ENCODE measurements at regions of chr6 and their contacts with region 1.

Region 1: DNA sequence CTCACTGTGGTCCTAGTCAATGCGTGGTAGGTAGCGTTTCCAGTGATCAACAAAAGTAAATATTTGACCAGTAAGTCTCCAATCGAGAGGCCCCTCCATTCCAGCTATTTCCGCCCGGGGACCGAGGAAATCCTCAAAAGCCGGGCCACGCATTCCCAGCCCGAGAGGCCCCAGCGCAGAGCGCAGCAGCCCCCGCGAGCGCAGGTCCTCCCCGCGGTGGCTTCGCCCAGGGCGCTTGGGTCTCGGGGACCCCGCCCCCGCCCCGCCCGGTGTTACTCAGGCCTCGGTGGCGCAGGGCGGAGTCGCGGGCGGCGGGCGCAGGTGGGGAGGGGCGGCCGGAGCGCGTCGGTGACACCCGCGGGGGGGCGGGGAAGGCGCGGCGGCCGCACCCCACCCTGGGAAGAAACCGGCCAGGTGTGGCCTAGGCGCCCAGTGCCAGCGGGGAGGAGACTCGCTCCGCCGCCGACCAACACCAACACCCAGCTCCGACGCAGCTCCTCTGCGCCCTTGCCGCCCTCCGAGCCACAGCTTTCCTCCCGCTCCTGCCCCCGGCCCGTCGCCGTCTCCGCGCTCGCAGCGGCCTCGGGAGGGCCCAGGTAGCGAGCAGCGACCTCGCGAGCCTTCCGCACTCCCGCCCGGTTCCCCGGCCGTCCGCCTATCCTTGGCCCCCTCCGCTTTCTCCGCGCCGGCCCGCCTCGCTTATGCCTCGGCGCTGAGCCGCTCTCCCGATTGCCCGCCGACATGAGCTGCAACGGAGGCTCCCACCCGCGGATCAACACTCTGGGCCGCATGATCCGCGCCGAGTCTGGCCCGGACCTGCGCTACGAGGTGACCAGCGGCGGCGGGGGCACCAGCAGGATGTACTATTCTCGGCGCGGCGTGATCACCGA is at the start of gene DSP:
- DNase-seq: peak; percentile 96
- ATAC-seq: peak; percentile 83
- H3K4me3 ChIP-seq: peak within 1 kb of the TSS; percentile 94 to 100 (median 95)
- H3K27ac ChIP-seq: peak within 1 kb of the TSS; percentile 90
- H3K4me1 ChIP-seq: peaks cover 53% of the 10 kb centered on the region
- H3K27me3 ChIP-seq: peaks cover 0 to 3% of the 10 kb centered on the region in 2 experiments; a peak in 1 of 5 replicates
- CTCF ChIP-seq: peak; percentile 14; the same call in 1 of the 2 replicates
- EP300 ChIP-seq: peak; percentile 46 to 89; a peak in 3 of 4 replicates
- POLR2A ChIP-seq: peak; percentile 92 to 95
- RAD21 ChIP-seq: peak; percentile 66
- total RNA-seq, gene DSP: 89.8 and 133 TPM in 2 replicates

Region 2: DNA sequence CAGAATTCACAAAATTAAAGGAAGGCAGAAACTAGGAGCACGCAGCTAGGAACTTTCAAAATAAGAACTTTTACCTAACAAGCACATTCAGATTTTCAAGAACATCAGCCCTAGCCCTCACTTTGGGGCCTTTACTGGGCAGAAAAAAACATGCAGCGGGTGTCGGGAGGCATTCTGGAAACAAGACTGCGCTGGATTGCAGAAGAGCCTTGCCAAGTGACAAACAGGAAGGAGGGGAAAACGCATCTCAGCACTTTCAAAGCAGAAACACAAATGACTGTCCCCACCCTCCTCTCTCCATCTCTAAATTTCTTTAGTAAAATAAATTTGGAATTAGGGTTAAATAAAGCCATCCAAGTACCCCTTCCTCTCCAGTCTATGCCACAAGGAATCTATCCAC is 508.2 kb before region 1 on chr6:
- CTCF ChIA-PET with region 1: no interaction called
- POLR2A ChIA-PET with region 1: no interaction called
- in situ Hi-C with region 1: no loop called
- intact Hi-C with region 1: no loop called
- DNase-seq: no peak
- ATAC-seq: no peak
- H3K4me3 ChIP-seq: no peak overlapping the region
- H3K27ac ChIP-seq: no peak overlapping the region
- H3K4me1 ChIP-seq: no peaks in the 10 kb centered on the region
- H3K27me3 ChIP-seq: no peaks in the 10 kb centered on the region
- CTCF ChIP-seq: no peak
- EP300 ChIP-seq: no peak
- POLR2A ChIP-seq: no peak
- RAD21 ChIP-seq: no peak

Region 3: GRCh38 chr6:7312616-7313504 is 228.6 kb before region 1 on chr6 and contains the start of gene SSR1:
- CTCF ChIA-PET with region 1: no interaction called
- POLR2A ChIA-PET with region 1: interaction called, 4 read pairs
- in situ Hi-C with region 1: no loop called
- intact Hi-C with region 1: loop called (anchors 5 kb)
- DNase-seq: peak; percentile 95
- ATAC-seq: peak; percentile 93
- H3K4me3 ChIP-seq: peak within 1 kb of the TSS; percentile 85 to 98 (median 97)
- H3K27ac ChIP-seq: peak within 1 kb of the TSS; percentile 91
- H3K4me1 ChIP-seq: peaks cover 69% of the 10 kb centered on the region
- H3K27me3 ChIP-seq: no peaks in the 10 kb centered on the region; a peak in 1 of 5 replicates
- CTCF ChIP-seq: no peak
- EP300 ChIP-seq: peak in 1 of 2 experiments; percentile 67; a peak in 2 of 4 replicates
- POLR2A ChIP-seq: peak; percentile 97 to 98
- RAD21 ChIP-seq: peak; percentile 54
- total RNA-seq, gene SSR1: 208 and 243 TPM in 2 replicates

Region 4: GRCh38 chr6:7424967-7425807 is 116.2 kb before region 1 on chr6:
- CTCF ChIA-PET with region 1: no interaction called
- POLR2A ChIA-PET with region 1: interaction called, 42 read pairs
- in situ Hi-C with region 1: loop called (anchors 5 kb)
- intact Hi-C with region 1: loop called (anchors 1 kb)
- DNase-seq: peak; percentile 79
- ATAC-seq: peak; percentile 85
- H3K4me3 ChIP-seq: no peak overlapping the region
- H3K27ac ChIP-seq: no peak overlapping the region
- H3K4me1 ChIP-seq: peaks cover 24% of the 10 kb centered on the region
- H3K27me3 ChIP-seq: no peaks in the 10 kb centered on the region
- CTCF ChIP-seq: peak; percentile 87
- EP300 ChIP-seq: no peak
- POLR2A ChIP-seq: no peak
- RAD21 ChIP-seq: peak; percentile 84

Region 5: DNA sequence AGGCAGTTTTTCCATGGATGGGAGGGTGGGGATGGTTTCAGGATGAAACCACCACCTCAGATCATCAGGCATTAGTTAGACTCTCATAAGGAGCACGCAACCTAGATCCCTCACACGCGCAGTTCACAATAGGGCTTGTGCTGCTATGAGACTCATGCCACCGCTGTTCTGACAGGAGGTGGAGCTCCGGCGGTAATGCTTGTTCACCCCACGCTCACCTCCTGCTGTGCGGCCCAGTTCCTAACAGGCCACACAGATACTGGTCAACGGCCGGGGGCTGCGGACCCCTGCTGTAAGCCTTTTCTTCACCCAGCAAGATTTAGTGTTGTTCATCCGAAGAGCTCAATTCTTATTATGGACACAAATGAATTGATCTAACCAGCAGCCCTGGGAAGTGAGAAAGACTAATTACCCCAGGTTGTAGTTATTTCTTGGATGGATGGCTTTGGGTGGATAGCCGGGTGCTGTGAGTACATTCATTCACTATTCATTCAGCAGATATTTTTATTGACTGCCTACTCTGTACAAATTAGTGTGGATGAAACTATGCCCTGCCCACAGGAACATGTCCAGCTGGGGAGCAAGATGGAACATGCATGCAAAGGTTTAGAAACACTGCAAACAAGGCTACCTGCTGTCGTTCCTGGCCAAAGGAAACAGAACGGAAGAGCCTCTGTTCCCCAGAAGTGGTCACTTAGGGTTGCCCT is 94.6 kb before region 1 on chr6:
- CTCF ChIA-PET with region 1: no interaction called
- POLR2A ChIA-PET with region 1: interaction called, 4 read pairs
- in situ Hi-C with region 1: no loop called
- intact Hi-C with region 1: loop called (anchors 1 kb)
- DNase-seq: peak; percentile 49
- ATAC-seq: peak; percentile 93
- H3K4me3 ChIP-seq: peak overlapping the region; percentile 16 to 55 (median 29); a peak in 5 of 6 replicates
- H3K27ac ChIP-seq: no peak overlapping the region
- H3K4me1 ChIP-seq: peaks cover 48% of the 10 kb centered on the region
- H3K27me3 ChIP-seq: peaks cover 5 to 20% of the 10 kb centered on the region in 2 experiments; a peak in 4 of 5 replicates
- CTCF ChIP-seq: peak; percentile 78
- EP300 ChIP-seq: no peak
- POLR2A ChIP-seq: no peak
- RAD21 ChIP-seq: peak; percentile 52; the same call in 1 of the 2 replicates

Region 6: DNA sequence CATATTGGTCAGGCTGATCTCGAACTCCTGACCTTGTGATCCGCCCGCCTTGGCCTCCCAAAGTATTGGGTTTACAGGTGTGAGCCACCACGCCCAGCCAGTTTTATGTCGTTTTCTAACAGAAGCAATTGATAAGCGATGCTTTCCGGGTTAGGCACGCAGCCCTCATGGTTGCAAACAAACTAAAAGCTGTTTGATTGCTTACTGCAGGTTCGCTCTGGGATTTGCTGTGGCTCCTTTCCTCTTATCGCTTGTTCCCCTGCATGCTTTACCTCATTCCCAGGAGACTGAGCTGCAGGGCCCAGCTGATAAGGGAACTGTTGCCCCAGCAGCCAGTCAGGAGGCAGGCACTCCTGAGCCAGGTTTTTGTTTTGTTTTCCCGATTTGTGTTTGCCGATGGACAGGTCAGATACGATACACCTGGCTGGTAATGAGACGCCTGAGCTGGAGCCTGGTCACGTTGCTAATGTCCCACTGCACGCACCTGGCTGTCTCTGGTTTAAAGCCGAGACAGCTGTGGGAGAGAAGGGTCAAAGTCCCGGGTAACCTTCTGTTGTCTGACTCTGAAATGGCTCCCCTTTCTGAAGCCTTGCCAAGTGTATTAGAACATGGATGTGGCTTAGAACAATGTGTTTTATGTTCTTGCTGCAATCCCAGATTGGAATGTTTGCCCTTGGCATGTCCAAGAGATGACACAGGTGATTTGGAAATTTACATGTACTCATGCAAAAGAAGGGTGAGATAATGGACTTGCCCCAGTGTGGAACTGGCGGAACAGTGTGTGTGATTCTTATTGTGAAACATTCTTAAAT is 19.9 kb after region 1 on chr6:
- CTCF ChIA-PET with region 1: no interaction called
- POLR2A ChIA-PET with region 1: interaction called, 132 read pairs
- in situ Hi-C with region 1: no loop called
- intact Hi-C with region 1: loop called (anchors 1 kb)
- DNase-seq: peak; percentile 100
- ATAC-seq: peak; percentile 92
- H3K4me3 ChIP-seq: peak overlapping the region in 1 of 3 experiments; percentile 12; a peak in 2 of 6 replicates
- H3K27ac ChIP-seq: peak overlapping the region; percentile 78
- H3K4me1 ChIP-seq: peaks cover 62% of the 10 kb centered on the region
- H3K27me3 ChIP-seq: no peaks in the 10 kb centered on the region
- CTCF ChIP-seq: peak; percentile 22; the same call in 1 of the 2 replicates
- EP300 ChIP-seq: peak in 1 of 2 experiments; percentile 89
- POLR2A ChIP-seq: peak; percentile 31 to 60; a peak in 2 of 4 replicates
- RAD21 ChIP-seq: peak; percentile 34

Region 7: DNA sequence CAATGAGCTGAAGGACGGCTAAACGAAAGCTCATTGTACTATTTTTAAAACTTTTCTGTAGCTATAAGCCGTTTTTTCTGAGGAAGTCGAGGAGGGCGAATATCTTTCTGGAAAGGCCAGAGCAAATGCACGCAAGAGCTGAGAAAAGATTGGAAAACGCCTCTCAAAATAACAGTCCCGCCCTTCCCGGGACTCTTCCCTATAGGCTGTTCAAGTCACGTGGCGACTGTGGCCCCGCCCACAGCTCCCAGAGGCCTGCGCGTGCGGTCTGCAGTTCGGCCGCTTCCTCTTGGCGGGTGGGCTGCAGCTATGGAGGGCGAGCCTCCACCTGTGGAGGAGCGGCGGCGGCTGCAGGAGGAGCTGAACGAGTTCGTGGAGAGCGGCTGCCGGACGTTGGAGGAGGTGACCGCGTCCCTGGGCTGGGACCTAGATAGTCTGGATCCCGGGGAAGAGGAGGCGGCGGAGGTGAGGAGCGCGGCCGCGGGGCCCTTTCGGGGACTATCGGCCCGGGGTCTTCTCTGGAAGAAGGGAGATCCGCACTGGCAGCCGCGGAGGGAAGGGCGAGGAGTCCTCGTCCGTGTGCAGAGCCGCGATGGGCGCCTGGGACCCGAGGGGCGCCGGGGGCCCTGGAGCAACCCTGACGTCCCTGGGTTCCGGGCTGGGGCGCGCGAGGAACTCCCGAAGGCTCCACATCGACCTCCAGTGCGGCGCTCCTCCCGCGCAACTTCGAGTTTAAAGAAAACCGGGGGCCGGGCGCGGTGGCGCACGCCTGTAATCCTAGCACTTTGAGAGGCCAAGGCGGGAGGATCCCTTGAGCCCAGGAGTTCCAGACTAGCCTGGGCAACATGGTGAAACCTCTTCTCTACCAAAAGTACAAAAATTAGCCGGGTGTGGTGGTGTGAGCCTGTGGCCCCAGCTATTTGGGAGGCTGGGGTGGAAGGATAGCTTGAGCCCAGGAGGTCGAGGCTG is 48.8 kb after region 1 on chr6 and contains the start of gene SNRNP48:
- CTCF ChIA-PET with region 1: no interaction called
- POLR2A ChIA-PET with region 1: interaction called, 13 read pairs
- in situ Hi-C with region 1: no loop called
- intact Hi-C with region 1: loop called (anchors 2 kb)
- DNase-seq: peak; percentile 93
- ATAC-seq: peak; percentile 97
- H3K4me3 ChIP-seq: peak within 1 kb of the TSS; percentile 77 to 88 (median 86)
- H3K27ac ChIP-seq: peak within 1 kb of the TSS; percentile 64
- H3K4me1 ChIP-seq: peaks cover 34% of the 10 kb centered on the region
- H3K27me3 ChIP-seq: no peaks in the 10 kb centered on the region
- CTCF ChIP-seq: 0 out of 2 replicates have a peak, but pooled peaks have one; percentile 11
- EP300 ChIP-seq: no peak
- POLR2A ChIP-seq: peak; percentile 73 to 96; a peak in 3 of 4 replicates
- RAD21 ChIP-seq: no peak
- total RNA-seq, gene SNRNP48: 47.5 and 82.0 TPM in 2 replicates

Region 8: DNA sequence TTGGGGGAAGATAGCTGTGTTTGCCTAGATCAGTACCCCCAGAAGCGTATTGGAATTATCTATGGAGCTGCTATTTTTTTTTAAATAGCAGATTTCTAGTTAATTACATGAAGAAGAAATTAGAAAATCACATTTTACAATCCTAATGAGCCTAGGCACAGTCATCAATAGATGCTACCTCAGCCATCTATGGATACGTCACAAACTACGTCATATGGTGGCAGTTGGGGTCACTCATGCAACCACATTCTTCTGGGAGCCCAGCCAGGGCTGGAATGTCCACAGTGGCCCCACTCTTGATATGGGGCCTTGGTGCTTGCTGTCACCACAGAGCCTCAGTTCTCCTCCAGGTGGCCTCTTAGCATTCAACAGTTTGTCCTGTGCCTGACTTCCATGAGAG is 111.5 kb after region 1 on chr6:
- CTCF ChIA-PET with region 1: no interaction called
- POLR2A ChIA-PET with region 1: no interaction called
- in situ Hi-C with region 1: no loop called
- intact Hi-C with region 1: no loop called
- DNase-seq: no peak
- ATAC-seq: no peak
- H3K4me3 ChIP-seq: no peak overlapping the region
- H3K27ac ChIP-seq: no peak overlapping the region
- H3K4me1 ChIP-seq: peaks cover 10% of the 10 kb centered on the region
- H3K27me3 ChIP-seq: peaks cover 0 to 19% of the 10 kb centered on the region in 2 experiments; a peak in 2 of 5 replicates
- CTCF ChIP-seq: no peak
- EP300 ChIP-seq: no peak
- POLR2A ChIP-seq: no peak
- RAD21 ChIP-seq: no peak